ENCODE measurements at regions of chr11 and their contacts with region 1.

Region 1: GRCh38 chr11:61187505-61188130 is 15.7 kb upstream of the PGA3 start:
- DNase-seq: peak; percentile 64 to 89 (median 83)
- ATAC-seq: peak; percentile 100
- H3K4me3 ChIP-seq: no peak overlapping the region
- H3K4me3 Mint-ChIP-seq: no peak overlapping the region
- H3K27ac ChIP-seq: no peak overlapping the region
- H3K27ac Mint-ChIP-seq: no peak overlapping the region
- H3K4me1 ChIP-seq: no peaks in the 10 kb centered on the region
- H3K4me1 Mint-ChIP-seq: peaks cover 3% of the 10 kb centered on the region
- H3K27me3 ChIP-seq: peaks cover 0 to 3% of the 10 kb centered on the region in 2 experiments
- H3K27me3 Mint-ChIP-seq: no peaks in the 10 kb centered on the region
- CTCF ChIP-seq: peak; percentile 98

Region 2: GRCh38 chr11:60775420-60775961 is 412.1 kb before region 1 on chr11:
- CTCF ChIA-PET with region 1: interaction called, 3 read pairs
- POLR2A ChIA-PET with region 1: no interaction called
- intact Hi-C with region 1: loop called in 1 of 2 experiments (anchors 1 kb)
- DNase-seq: peak; percentile 65 to 90 (median 84)
- ATAC-seq: peak; percentile 98
- H3K4me3 ChIP-seq: no peak overlapping the region
- H3K4me3 Mint-ChIP-seq: peak overlapping the region; percentile 13
- H3K27ac ChIP-seq: no peak overlapping the region
- H3K27ac Mint-ChIP-seq: peak overlapping the region; percentile 18
- H3K4me1 ChIP-seq: peaks cover 4% of the 10 kb centered on the region
- H3K4me1 Mint-ChIP-seq: peaks cover 10% of the 10 kb centered on the region
- H3K27me3 ChIP-seq: no peaks in the 10 kb centered on the region
- H3K27me3 Mint-ChIP-seq: peaks cover 3% of the 10 kb centered on the region
- CTCF ChIP-seq: peak; percentile 81

Region 3: GRCh38 chr11:60899046-60899936 is 288.3 kb before region 1 on chr11:
- CTCF ChIA-PET with region 1: interaction called, 10 read pairs
- POLR2A ChIA-PET with region 1: no interaction called
- intact Hi-C with region 1: loop called in 1 of 2 experiments (anchors 5 kb)
- DNase-seq: peak in 4 of 9 experiments; percentile 28 to 70 (median 47)
- ATAC-seq: peak; percentile 88
- H3K4me3 ChIP-seq: no peak overlapping the region
- H3K4me3 Mint-ChIP-seq: no peak overlapping the region
- H3K27ac ChIP-seq: no peak overlapping the region
- H3K27ac Mint-ChIP-seq: no peak overlapping the region
- H3K4me1 ChIP-seq: peaks cover 10% of the 10 kb centered on the region
- H3K4me1 Mint-ChIP-seq: peaks cover 16% of the 10 kb centered on the region
- H3K27me3 ChIP-seq: no peaks in the 10 kb centered on the region
- H3K27me3 Mint-ChIP-seq: no peaks in the 10 kb centered on the region
- CTCF ChIP-seq: peak; percentile 99

Region 4: DNA sequence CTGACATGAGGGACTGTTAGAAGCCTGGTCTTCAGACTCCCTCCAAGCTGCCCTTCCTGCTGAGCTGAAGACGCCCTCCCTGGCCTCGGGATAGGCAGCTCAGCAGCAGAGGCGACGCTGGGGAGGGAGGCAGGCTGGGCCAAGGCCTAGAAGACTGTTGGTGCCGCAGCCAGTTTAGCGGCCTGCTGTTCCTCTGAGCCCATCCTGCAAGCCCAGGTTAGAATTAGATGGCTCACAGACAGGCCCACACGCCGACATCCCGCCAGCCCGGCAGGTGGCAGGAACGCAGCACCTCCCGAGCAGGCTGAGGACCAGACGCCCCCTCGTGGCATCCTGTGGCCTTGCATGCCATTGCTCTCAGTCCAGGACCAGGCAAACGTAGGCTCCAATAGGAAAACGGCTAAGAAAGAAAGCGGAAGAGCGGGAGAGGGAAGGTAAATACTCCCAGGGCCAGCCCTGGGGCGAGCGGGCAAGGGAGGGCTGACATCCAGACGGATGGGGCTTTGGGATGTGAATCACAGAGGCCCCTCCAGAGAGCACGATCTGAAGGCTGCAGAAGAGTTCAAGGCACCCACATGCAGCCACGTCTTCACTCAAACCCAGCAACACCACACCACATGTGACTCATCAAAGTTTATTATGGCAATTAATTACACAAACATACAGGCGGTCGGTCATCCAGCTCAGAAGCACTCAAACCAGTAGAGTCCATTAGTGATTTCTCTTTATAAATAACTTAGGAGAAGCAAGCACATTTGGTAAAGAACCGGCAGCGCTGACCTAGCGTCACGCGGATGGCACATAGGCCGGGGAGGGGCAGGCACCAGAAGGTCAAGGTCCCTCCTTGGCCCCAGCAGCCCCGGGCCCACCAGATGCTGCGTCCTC is 57.7 kb before region 1 on chr11:
- CTCF ChIA-PET with region 1: interaction called, 29 read pairs
- POLR2A ChIA-PET with region 1: no interaction called
- intact Hi-C with region 1: loop called (anchors 1 kb)
- DNase-seq: peak; percentile 76 to 95 (median 91)
- ATAC-seq: peak; percentile 91
- H3K4me3 ChIP-seq: no peak overlapping the region
- H3K4me3 Mint-ChIP-seq: peak overlapping the region; percentile 46
- H3K27ac ChIP-seq: no peak overlapping the region
- H3K27ac Mint-ChIP-seq: peak overlapping the region; percentile 64
- H3K4me1 ChIP-seq: peaks cover 17% of the 10 kb centered on the region
- H3K4me1 Mint-ChIP-seq: peaks cover 21% of the 10 kb centered on the region
- H3K27me3 ChIP-seq: no peaks in the 10 kb centered on the region
- H3K27me3 Mint-ChIP-seq: no peaks in the 10 kb centered on the region
- CTCF ChIP-seq: peak; percentile 100

Region 5: GRCh38 chr11:61141601-61142028 is 46.0 kb before region 1 on chr11:
- CTCF ChIA-PET with region 1: interaction called, 21 read pairs
- POLR2A ChIA-PET with region 1: no interaction called
- intact Hi-C with region 1: no loop called
- DNase-seq: no peak
- ATAC-seq: no peak
- H3K4me3 ChIP-seq: no peak overlapping the region
- H3K4me3 Mint-ChIP-seq: no peak overlapping the region
- H3K27ac ChIP-seq: no peak overlapping the region
- H3K27ac Mint-ChIP-seq: no peak overlapping the region
- H3K4me1 ChIP-seq: peaks cover under 1% of the 10 kb centered on the region
- H3K4me1 Mint-ChIP-seq: peaks cover 9% of the 10 kb centered on the region
- H3K27me3 ChIP-seq: no peaks in the 10 kb centered on the region
- H3K27me3 Mint-ChIP-seq: no peaks in the 10 kb centered on the region
- CTCF ChIP-seq: no peak

Region 6: DNA sequence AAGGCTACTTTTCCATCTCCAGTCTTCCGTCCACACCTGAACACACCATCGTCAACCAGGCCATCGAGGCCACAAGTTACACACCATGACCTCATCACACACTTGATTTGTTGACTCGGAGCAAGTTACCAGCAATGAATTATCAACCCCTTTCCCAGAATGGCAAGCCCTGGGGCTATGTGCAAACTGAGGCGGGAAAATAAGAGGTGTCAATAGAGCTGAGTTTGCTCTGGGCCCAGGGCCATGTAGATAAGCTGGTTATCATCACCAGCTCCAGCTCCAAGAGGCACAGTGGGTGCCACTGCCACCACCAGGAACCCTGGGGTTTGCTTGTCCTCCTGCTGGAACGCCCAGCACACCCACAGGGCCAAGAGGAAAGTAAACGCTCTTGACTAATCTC is 13.4 kb before region 1 on chr11:
- CTCF ChIA-PET with region 1: interaction called, 11 read pairs
- POLR2A ChIA-PET with region 1: no interaction called
- intact Hi-C with region 1: no loop called
- DNase-seq: no peak
- ATAC-seq: no peak
- H3K4me3 ChIP-seq: no peak overlapping the region
- H3K4me3 Mint-ChIP-seq: no peak overlapping the region
- H3K27ac ChIP-seq: no peak overlapping the region
- H3K27ac Mint-ChIP-seq: no peak overlapping the region
- H3K4me1 ChIP-seq: peaks cover 14% of the 10 kb centered on the region
- H3K4me1 Mint-ChIP-seq: peaks cover 17% of the 10 kb centered on the region
- H3K27me3 ChIP-seq: no peaks in the 10 kb centered on the region
- H3K27me3 Mint-ChIP-seq: no peaks in the 10 kb centered on the region
- CTCF ChIP-seq: no peak

Measured in CD8-positive, alpha-beta T cell (primary cell).